ENCODE measurements at regions of chr10 and their contacts with region 1.

Region 1: DNA sequence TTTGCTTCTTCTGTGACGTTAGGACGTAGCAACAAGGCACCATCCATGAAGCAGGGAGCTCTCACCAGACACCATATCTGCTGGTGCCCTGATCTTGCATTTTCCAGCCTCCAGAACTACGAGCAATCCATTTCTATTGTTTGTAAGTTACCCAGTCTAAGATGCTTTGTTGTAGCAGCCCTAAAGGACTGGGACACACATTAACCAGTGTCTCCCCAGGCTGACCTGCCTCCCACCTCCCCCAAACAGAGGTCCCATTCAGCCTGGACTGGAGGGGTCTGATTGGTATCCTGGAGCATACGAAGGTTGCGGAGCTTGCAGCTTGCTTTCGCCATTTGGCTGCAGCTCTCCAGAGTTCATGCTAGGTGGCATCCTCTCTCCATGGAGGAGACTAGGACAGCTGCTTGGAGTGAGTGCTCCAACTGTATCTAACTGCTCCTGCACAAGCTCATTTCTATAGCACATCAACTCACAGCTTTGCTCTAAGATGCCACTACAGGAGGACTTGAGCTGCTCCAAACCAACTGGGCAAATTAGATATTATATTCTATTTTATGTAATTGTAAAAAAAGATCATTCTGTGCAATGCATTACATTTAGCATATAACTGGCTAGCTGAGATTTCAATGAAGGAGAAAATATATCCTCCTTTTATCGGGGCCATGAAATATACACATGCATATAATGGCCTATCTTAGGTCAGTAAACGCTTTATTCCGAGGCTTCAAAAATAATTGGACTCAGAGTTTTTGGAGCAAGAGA is 8.0 kb upstream of the GRK5 start:
- DNase-seq: no peak
- ATAC-seq: peak; percentile 93
- H3K4me3 ChIP-seq: no peak overlapping the region
- H3K27ac ChIP-seq: no peak overlapping the region
- H3K4me1 ChIP-seq: no peaks in the 10 kb centered on the region
- H3K27me3 ChIP-seq: no peaks in the 10 kb centered on the region
- CTCF ChIP-seq: peak; percentile 72 to 88 (median 80)
- EP300 ChIP-seq: no peak
- POLR2A ChIP-seq: no peak
- RAD21 ChIP-seq: peak; percentile 84

Region 2: DNA sequence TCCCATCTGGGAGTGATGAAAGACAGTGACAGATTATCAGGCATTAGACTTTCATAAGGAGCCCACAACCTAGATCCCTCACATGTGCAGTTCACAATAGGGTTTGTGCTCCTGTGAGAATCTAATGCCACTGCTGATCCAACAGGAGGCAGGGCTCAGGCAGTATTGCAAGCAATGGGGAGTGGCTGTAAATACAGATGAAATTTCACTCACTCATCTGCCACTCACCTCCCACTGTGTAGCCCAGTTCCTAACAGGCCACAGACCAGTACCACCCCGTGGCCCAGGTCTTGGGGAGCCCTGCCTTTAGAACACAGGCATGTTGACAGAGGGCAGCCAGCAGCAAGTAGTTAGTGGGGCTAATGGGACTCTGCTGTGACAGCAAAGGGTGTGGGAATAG is 307.2 kb before region 1 on chr10:
- CTCF ChIA-PET with region 1: no interaction called
- POLR2A ChIA-PET with region 1: no interaction called
- RAD21 ChIA-PET with region 1: no interaction called
- SMC1A ChIA-PET with region 1: no interaction called
- in situ Hi-C with region 1: no loop called
- intact Hi-C with region 1: no loop called
- DNase-seq: no peak
- ATAC-seq: no peak
- H3K4me3 ChIP-seq: no peak overlapping the region
- H3K27ac ChIP-seq: no peak overlapping the region
- H3K4me1 ChIP-seq: no peaks in the 10 kb centered on the region
- H3K27me3 ChIP-seq: peaks cover 0 to 2% of the 10 kb centered on the region in 2 experiments; a peak in 1 of 4 replicates
- CTCF ChIP-seq: no peak
- EP300 ChIP-seq: no peak
- POLR2A ChIP-seq: no peak
- RAD21 ChIP-seq: no peak

Region 3: DNA sequence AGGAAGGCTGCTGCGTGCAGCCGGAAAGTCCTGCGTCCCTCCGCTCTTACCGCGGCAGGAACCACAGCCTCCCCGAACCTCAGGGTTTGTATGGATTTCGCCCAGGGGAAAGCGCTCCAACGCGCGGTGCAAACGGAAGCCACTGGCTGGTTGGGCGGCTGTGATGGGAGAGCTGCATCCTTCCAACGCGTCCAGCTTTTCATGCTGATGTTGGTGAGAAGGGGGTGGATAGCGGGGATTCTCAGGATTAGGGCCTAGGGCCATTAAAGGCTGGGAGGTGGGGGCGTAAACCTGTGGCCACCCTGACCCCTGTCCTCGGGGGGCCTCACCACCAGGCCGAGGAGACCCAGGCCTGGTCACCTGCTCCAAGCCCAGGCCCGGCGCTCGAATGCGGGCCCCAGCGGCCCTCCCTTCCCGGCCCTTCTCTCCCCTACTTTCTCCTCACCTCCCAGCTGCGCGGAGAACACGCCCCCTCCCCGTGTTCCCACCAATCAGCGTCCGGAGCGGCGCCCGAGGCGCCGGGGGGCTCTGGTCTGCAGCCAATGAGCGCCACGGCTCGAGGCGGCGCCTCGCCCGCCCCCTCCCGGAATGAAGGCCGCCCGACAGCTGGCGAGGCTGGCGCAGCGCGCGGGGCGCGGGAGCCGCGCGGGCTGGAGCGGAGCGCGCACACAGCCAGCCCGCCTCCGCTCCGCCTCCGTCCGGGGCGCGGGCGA is 170.4 kb before region 1 on chr10:
- CTCF ChIA-PET with region 1: interaction called, 16 read pairs
- POLR2A ChIA-PET with region 1: no interaction called
- RAD21 ChIA-PET with region 1: interaction called, 5 read pairs
- SMC1A ChIA-PET with region 1: interaction called, 10 read pairs
- in situ Hi-C with region 1: no loop called
- intact Hi-C with region 1: no loop called
- DNase-seq: peak; percentile 35
- ATAC-seq: peak; percentile 68
- H3K4me3 ChIP-seq: peak overlapping the region; percentile 54
- H3K27ac ChIP-seq: no peak overlapping the region
- H3K4me1 ChIP-seq: peaks cover 13% of the 10 kb centered on the region
- H3K27me3 ChIP-seq: no peaks in the 10 kb centered on the region; a peak in 1 of 4 replicates
- CTCF ChIP-seq: peak; percentile 9 to 24 (median 10); a peak in 2 of 6 replicates
- EP300 ChIP-seq: no peak
- POLR2A ChIP-seq: no peak
- RAD21 ChIP-seq: no peak

Region 4: GRCh38 chr10:119139464-119140067 is 59.8 kb before region 1 on chr10:
- CTCF ChIA-PET with region 1: interaction called, 16 read pairs
- POLR2A ChIA-PET with region 1: no interaction called
- RAD21 ChIA-PET with region 1: no interaction called
- SMC1A ChIA-PET with region 1: interaction called, 4 read pairs
- in situ Hi-C with region 1: no loop called
- intact Hi-C with region 1: no loop called
- DNase-seq: no peak
- ATAC-seq: peak; percentile 93
- H3K4me3 ChIP-seq: no peak overlapping the region
- H3K27ac ChIP-seq: no peak overlapping the region
- H3K4me1 ChIP-seq: no peaks in the 10 kb centered on the region
- H3K27me3 ChIP-seq: no peaks in the 10 kb centered on the region
- CTCF ChIP-seq: peak; percentile 60 to 79 (median 67)
- EP300 ChIP-seq: no peak
- POLR2A ChIP-seq: no peak; the same call in 1 of the 2 replicates
- RAD21 ChIP-seq: peak; percentile 64

Region 5: GRCh38 chr10:119233123-119233820 is 33.9 kb after region 1 on chr10:
- CTCF ChIA-PET with region 1: no interaction called
- POLR2A ChIA-PET with region 1: no interaction called
- RAD21 ChIA-PET with region 1: no interaction called
- SMC1A ChIA-PET with region 1: no interaction called
- in situ Hi-C with region 1: no loop called
- intact Hi-C with region 1: no loop called
- DNase-seq: no peak
- ATAC-seq: no peak
- H3K4me3 ChIP-seq: no peak overlapping the region
- H3K27ac ChIP-seq: 0 out of 2 replicates have a peak overlapping the region, but pooled peaks have one; percentile 8
- H3K4me1 ChIP-seq: peaks cover 13% of the 10 kb centered on the region
- H3K27me3 ChIP-seq: no peaks in the 10 kb centered on the region
- CTCF ChIP-seq: no peak
- EP300 ChIP-seq: no peak
- POLR2A ChIP-seq: no peak
- RAD21 ChIP-seq: no peak

Region 6: DNA sequence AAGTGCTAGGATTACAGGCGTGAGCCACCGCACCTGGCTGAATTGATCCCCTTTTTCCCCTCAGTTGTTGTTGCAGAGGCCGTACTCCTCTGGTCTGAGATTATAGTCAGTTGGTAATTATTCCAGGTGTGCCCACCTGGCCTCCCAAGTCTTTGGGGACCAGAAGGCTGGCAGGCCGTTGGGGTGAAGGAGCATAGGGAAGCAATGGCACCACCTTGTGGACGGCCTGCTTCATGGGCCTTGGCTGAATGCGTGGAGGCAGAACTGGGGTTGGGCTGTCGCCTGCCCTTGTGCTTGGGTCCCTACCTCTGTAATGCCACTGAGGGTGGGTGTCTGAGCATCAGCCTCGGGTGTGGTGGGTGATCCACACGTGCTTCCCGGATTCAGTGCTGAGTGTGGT is 217.4 kb after region 1 on chr10:
- CTCF ChIA-PET with region 1: interaction called, 70 read pairs
- POLR2A ChIA-PET with region 1: interaction called, 3 read pairs
- RAD21 ChIA-PET with region 1: interaction called, 29 read pairs
- SMC1A ChIA-PET with region 1: interaction called, 21 read pairs
- in situ Hi-C with region 1: loop called (anchors 5 kb)
- intact Hi-C with region 1: loop called (anchors 1 kb)
- DNase-seq: peak; percentile 15
- ATAC-seq: peak; percentile 97
- H3K4me3 ChIP-seq: no peak overlapping the region
- H3K27ac ChIP-seq: no peak overlapping the region
- H3K4me1 ChIP-seq: no peaks in the 10 kb centered on the region
- H3K27me3 ChIP-seq: no peaks in the 10 kb centered on the region
- CTCF ChIP-seq: peak; percentile 84 to 90 (median 85)
- EP300 ChIP-seq: no peak
- POLR2A ChIP-seq: no peak
- RAD21 ChIP-seq: peak; percentile 93

Region 7: GRCh38 chr10:119478111-119478802 is 278.8 kb after region 1 on chr10:
- CTCF ChIA-PET with region 1: interaction called, 7 read pairs
- POLR2A ChIA-PET with region 1: no interaction called
- RAD21 ChIA-PET with region 1: interaction called, 5 read pairs
- SMC1A ChIA-PET with region 1: interaction called, 11 read pairs
- in situ Hi-C with region 1: no loop called
- intact Hi-C with region 1: no loop called
- DNase-seq: peak; percentile 46
- ATAC-seq: peak; percentile 98
- H3K4me3 ChIP-seq: peak overlapping the region; percentile 35; the same call in 1 of the 2 replicates
- H3K27ac ChIP-seq: peak overlapping the region; percentile 30; the same call in 1 of the 2 replicates
- H3K4me1 ChIP-seq: peaks cover 25% of the 10 kb centered on the region
- H3K27me3 ChIP-seq: no peaks in the 10 kb centered on the region
- CTCF ChIP-seq: no peak
- EP300 ChIP-seq: peak in 1 of 2 experiments; percentile 27; a peak in 1 of 4 replicates
- POLR2A ChIP-seq: no peak
- RAD21 ChIP-seq: no peak

Region 8: GRCh38 chr10:119602241-119603095 is 403.1 kb after region 1 on chr10:
- CTCF ChIA-PET with region 1: interaction called, 3 read pairs
- POLR2A ChIA-PET with region 1: no interaction called
- RAD21 ChIA-PET with region 1: interaction called, 11 read pairs
- SMC1A ChIA-PET with region 1: interaction called, 10 read pairs
- in situ Hi-C with region 1: no loop called
- intact Hi-C with region 1: no loop called
- DNase-seq: no peak
- ATAC-seq: peak; percentile 73
- H3K4me3 ChIP-seq: no peak overlapping the region
- H3K27ac ChIP-seq: no peak overlapping the region
- H3K4me1 ChIP-seq: peaks cover 7% of the 10 kb centered on the region; the same call in 1 of the 2 replicates
- H3K27me3 ChIP-seq: no peaks in the 10 kb centered on the region
- CTCF ChIP-seq: peak; percentile 65 to 79 (median 69)
- EP300 ChIP-seq: no peak
- POLR2A ChIP-seq: no peak
- RAD21 ChIP-seq: peak; percentile 44